AG04450 (cell line): ENCODE measurements at regions of chr9 and their contacts with region 1.

Region 1: GRCh38 chr9:25703701-25704357 is 25.6 kb upstream of the TUSC1 start:
- DNase-seq: no peak
- H3K4me3 ChIP-seq: no peak overlapping the region
- H3K27ac ChIP-seq: no peak overlapping the region
- H3K27me3 ChIP-seq: no peaks in the 10 kb centered on the region
- CTCF ChIP-seq: no peak

Region 2: GRCh38 chr9:25658571-25658970 is 45.3 kb before region 1 on chr9:
- CTCF ChIA-PET with region 1: no interaction called
- POLR2A ChIA-PET with region 1: no interaction called
- DNase-seq: no peak
- H3K4me3 ChIP-seq: no peak overlapping the region
- H3K27ac ChIP-seq: no peak overlapping the region
- H3K27me3 ChIP-seq: no peaks in the 10 kb centered on the region
- CTCF ChIP-seq: no peak

Region 3: GRCh38 chr9:25684321-25684720 is 19.5 kb before region 1 on chr9:
- CTCF ChIA-PET with region 1: no interaction called
- POLR2A ChIA-PET with region 1: no interaction called
- DNase-seq: no peak
- H3K4me3 ChIP-seq: no peak overlapping the region
- H3K27ac ChIP-seq: no peak overlapping the region
- H3K27me3 ChIP-seq: peaks cover 3% of the 10 kb centered on the region
- CTCF ChIP-seq: no peak

Region 4: DNA sequence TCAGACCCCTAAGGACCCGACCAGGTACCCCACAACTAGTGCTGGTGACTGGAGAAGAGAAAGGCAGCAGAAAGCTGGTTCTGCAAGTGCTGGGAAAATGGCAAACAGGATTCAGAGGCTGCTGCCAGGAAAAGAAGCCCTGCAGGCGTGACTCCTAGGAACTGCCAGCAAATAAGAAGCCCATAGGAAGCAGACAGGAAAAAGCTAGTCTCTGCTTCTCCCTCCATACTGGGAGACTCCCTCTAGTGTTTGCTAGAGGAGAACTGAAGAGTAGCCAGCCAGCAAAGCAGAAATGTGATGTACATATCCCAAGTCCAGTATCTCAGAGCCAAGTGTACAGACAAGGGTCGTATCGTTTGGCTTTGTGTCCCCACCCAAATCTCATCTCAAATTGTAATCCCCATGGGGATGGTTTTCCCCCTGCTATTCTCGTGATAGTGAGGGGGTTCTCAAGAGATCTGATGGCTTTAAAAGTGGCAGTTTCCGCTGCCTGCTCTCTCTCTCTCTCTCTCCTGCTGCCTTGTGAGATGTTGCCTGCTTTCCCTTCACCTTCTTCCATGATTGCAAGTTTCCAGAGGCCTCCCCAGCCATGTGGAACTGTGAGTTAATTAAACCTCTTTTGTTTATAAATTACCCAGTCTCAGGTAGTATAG is 12.5 kb after region 1 on chr9:
- CTCF ChIA-PET with region 1: interaction called, 17 read pairs
- POLR2A ChIA-PET with region 1: no interaction called
- DNase-seq: peak; percentile 49
- H3K4me3 ChIP-seq: no peak overlapping the region
- H3K27ac ChIP-seq: no peak overlapping the region
- H3K27me3 ChIP-seq: no peaks in the 10 kb centered on the region
- CTCF ChIP-seq: peak; percentile 88